GM12878 (cell line): ENCODE measurements at regions of chr1 and their contacts with region 1.

Region 1: GRCh38 chr1:241611063-241611462 is 29.1 kb downstream of the CHML start:
- DNase-seq: no peak
- ATAC-seq: peak; percentile 96
- H3K4me3 ChIP-seq: no peak overlapping the region
- H3K27ac ChIP-seq: no peak overlapping the region
- H3K4me1 ChIP-seq: peaks cover 5% of the 10 kb centered on the region; the same call in 1 of the 2 replicates
- H3K27me3 ChIP-seq: no peaks in the 10 kb centered on the region
- CTCF ChIP-seq: peak; percentile 59 to 67 (median 62); a peak in 5 of 6 replicates
- EP300 ChIP-seq: no peak
- POLR2A ChIP-seq: no peak
- RAD21 ChIP-seq: peak; percentile 80

Region 2: DNA sequence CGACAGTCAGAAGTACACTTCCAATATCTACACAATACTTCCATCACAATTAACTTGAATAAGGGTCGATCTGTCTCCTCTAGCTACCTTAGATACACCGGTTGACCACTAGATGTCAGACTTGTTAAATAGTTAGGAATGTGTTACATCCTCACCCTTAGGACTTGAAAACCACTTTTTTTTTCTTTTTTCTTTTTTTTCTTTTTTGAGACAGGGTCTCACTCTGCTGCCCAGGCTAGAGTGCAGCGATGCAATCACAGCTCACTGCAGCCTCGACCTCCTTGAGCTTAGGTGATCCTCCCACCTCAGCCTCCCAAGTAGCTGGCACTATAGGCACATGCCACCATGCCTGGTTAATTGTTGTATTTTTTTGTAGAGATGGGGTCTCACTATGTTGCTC is 878.7 kb before region 1 on chr1:
- CTCF ChIA-PET with region 1: interaction called, 3 read pairs
- POLR2A ChIA-PET with region 1: no interaction called
- RAD21 ChIA-PET with region 1: no interaction called
- SMC1A ChIA-PET with region 1: no interaction called
- in situ Hi-C with region 1: no loop called
- intact Hi-C with region 1: loop called (anchors 10 kb)
- DNase-seq: no peak
- ATAC-seq: peak; percentile 92
- H3K4me3 ChIP-seq: no peak overlapping the region
- H3K27ac ChIP-seq: no peak overlapping the region
- H3K4me1 ChIP-seq: no peaks in the 10 kb centered on the region
- H3K27me3 ChIP-seq: no peaks in the 10 kb centered on the region
- CTCF ChIP-seq: peak; percentile 53 to 61 (median 59); a peak in 5 of 6 replicates
- EP300 ChIP-seq: no peak
- POLR2A ChIP-seq: no peak
- RAD21 ChIP-seq: peak; percentile 70

Region 3: GRCh38 chr1:241592273-241592958 is 18.6 kb before region 1 on chr1:
- CTCF ChIA-PET with region 1: interaction called, 30 read pairs
- POLR2A ChIA-PET with region 1: no interaction called
- RAD21 ChIA-PET with region 1: interaction called, 7 read pairs
- SMC1A ChIA-PET with region 1: no interaction called
- in situ Hi-C with region 1: no loop called
- intact Hi-C with region 1: no loop called
- DNase-seq: peak; percentile 13
- ATAC-seq: peak; percentile 66
- H3K4me3 ChIP-seq: no peak overlapping the region
- H3K27ac ChIP-seq: no peak overlapping the region; the same call in 1 of the 2 replicates
- H3K4me1 ChIP-seq: no peaks in the 10 kb centered on the region
- H3K27me3 ChIP-seq: no peaks in the 10 kb centered on the region
- CTCF ChIP-seq: no peak
- EP300 ChIP-seq: no peak
- POLR2A ChIP-seq: no peak
- RAD21 ChIP-seq: no peak

Region 4: DNA sequence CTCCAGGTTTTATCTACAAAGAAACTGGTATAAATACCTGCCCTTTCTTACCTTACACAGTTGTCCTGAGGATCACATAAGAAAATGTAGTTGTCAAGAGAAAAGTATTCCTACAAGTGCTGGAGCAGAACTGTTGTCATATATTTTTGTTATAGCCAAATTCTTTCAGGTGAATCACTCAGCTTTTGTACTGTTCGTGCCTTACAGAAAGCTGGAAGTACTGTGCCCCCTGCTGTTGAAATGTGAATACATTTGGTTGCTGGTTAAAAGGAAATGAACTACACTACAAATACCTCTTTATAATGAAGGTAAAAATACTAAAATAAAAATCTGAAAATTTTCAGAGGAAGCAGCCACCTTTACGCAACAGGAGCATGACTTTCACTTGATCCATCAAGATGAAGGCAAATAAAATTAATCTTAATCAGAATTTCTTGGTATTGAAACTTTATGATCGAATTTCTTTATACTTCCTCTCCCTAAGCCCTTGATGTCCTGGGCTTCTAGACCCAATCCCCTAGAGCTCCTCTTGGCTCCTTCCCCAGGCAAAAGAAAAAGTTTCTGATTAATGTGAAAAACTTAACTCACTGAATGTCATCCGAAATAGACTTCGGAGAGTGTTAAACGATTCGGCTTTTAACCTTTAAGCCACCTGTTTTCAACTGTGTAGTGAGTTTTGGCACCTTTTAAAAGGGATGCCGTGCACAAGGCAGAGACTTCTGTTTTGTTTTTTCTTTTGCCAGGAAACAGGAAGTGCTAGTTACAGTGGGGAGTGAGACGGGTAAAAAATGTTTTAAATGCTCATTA is 16.6 kb after region 1 on chr1:
- CTCF ChIA-PET with region 1: interaction called, 59 read pairs
- POLR2A ChIA-PET with region 1: interaction called, 6 read pairs
- RAD21 ChIA-PET with region 1: interaction called, 23 read pairs
- SMC1A ChIA-PET with region 1: interaction called, 28 read pairs
- in situ Hi-C with region 1: no loop called
- intact Hi-C with region 1: no loop called
- DNase-seq: peak; percentile 35
- ATAC-seq: peak; percentile 92
- H3K4me3 ChIP-seq: peak overlapping the region; percentile 12; the same call in 1 of the 2 replicates
- H3K27ac ChIP-seq: peak overlapping the region; percentile 66
- H3K4me1 ChIP-seq: peaks cover 3% of the 10 kb centered on the region
- H3K27me3 ChIP-seq: no peaks in the 10 kb centered on the region
- CTCF ChIP-seq: peak; percentile 50 to 66 (median 64); a peak in 5 of 6 replicates
- EP300 ChIP-seq: no peak
- POLR2A ChIP-seq: no peak
- RAD21 ChIP-seq: peak; percentile 80

Region 5: GRCh38 chr1:241842565-241842964 is 231.5 kb after region 1 on chr1:
- CTCF ChIA-PET with region 1: interaction called, 10 read pairs
- POLR2A ChIA-PET with region 1: no interaction called
- RAD21 ChIA-PET with region 1: interaction called, 5 read pairs
- SMC1A ChIA-PET with region 1: interaction called, 7 read pairs
- in situ Hi-C with region 1: loop called (anchors 5 kb)
- intact Hi-C with region 1: no loop called
- DNase-seq: no peak
- ATAC-seq: no peak
- H3K4me3 ChIP-seq: no peak overlapping the region
- H3K27ac ChIP-seq: no peak overlapping the region
- H3K4me1 ChIP-seq: peaks cover 11% of the 10 kb centered on the region
- H3K27me3 ChIP-seq: no peaks in the 10 kb centered on the region
- CTCF ChIP-seq: no peak
- EP300 ChIP-seq: no peak
- POLR2A ChIP-seq: no peak
- RAD21 ChIP-seq: no peak

Region 6: DNA sequence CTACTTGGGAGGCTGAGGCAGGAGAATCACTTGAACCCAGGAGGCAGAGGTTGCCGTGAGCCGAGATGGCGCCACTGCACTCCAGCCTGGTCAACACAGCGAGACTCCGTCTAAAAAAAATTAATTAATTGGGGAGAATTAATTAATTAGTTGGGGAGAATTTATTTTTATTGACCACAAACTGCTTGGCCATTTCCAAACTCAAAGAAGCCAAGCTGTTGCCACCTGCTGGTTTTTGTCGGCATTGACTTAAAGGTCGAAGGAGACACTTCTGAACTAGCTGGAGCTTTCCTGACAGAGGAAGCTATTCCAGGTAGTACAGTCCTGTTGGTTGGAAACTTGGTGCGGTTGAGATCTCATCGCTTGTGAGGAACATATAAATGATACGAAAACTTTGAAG is 374.7 kb after region 1 on chr1:
- CTCF ChIA-PET with region 1: interaction called, 20 read pairs
- POLR2A ChIA-PET with region 1: no interaction called
- RAD21 ChIA-PET with region 1: interaction called, 9 read pairs
- SMC1A ChIA-PET with region 1: interaction called, 13 read pairs
- in situ Hi-C with region 1: loop called (anchors 10 kb)
- intact Hi-C with region 1: no loop called
- DNase-seq: no peak
- ATAC-seq: peak; percentile 19; the same call in 1 of the 3 replicates
- H3K4me3 ChIP-seq: no peak overlapping the region
- H3K27ac ChIP-seq: no peak overlapping the region
- H3K4me1 ChIP-seq: no peaks in the 10 kb centered on the region
- H3K27me3 ChIP-seq: no peaks in the 10 kb centered on the region
- CTCF ChIP-seq: peak; percentile 45 to 52 (median 52); a peak in 5 of 6 replicates
- EP300 ChIP-seq: no peak
- POLR2A ChIP-seq: no peak
- RAD21 ChIP-seq: peak; percentile 51

Region 7: DNA sequence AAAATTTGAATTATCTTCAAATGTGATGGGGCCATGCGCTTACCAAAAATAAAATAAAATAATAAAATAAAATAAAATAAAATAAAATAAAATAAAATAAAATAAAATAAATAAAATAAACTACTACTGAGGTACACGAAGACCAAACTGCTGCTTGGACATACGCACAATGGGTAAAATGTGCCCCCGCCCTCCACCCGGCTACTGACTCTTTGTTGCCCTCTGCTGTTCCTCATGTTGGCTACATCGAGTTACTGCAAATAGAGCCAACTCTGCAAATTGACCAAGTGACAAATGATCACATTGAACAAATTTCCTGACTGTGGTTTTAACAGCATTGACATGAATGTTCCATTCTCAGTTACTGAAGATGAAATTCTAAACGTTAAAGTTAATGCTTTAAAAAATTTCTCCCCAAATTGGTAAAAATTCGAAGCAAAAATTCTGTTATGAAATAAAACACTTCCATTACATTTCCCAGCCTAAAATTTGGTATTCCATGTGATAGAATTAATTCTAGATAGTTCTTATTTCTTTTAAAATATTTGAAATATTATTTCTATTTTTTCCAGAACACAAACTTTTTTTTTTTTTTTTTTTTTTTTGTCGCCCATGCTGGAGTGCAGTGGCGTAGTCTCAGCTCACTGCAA is 406.6 kb after region 1 on chr1:
- CTCF ChIA-PET with region 1: interaction called, 4 read pairs
- POLR2A ChIA-PET with region 1: no interaction called
- RAD21 ChIA-PET with region 1: interaction called, 4 read pairs
- SMC1A ChIA-PET with region 1: interaction called, 3 read pairs
- in situ Hi-C with region 1: no loop called
- intact Hi-C with region 1: loop called (anchors 5 kb)
- DNase-seq: no peak
- ATAC-seq: peak; percentile 93
- H3K4me3 ChIP-seq: no peak overlapping the region
- H3K27ac ChIP-seq: no peak overlapping the region
- H3K4me1 ChIP-seq: no peaks in the 10 kb centered on the region
- H3K27me3 ChIP-seq: no peaks in the 10 kb centered on the region
- CTCF ChIP-seq: peak; percentile 54 to 70 (median 61)
- EP300 ChIP-seq: no peak
- POLR2A ChIP-seq: no peak
- RAD21 ChIP-seq: peak; percentile 55